ENCODE measurements at regions of chr17 and their contacts with region 1.

Region 1: GRCh38 chr17:59707114-59707970 is at the starts of genes PTRH2 and VMP1:
- DNase-seq: peak; percentile 99

Region 2: DNA sequence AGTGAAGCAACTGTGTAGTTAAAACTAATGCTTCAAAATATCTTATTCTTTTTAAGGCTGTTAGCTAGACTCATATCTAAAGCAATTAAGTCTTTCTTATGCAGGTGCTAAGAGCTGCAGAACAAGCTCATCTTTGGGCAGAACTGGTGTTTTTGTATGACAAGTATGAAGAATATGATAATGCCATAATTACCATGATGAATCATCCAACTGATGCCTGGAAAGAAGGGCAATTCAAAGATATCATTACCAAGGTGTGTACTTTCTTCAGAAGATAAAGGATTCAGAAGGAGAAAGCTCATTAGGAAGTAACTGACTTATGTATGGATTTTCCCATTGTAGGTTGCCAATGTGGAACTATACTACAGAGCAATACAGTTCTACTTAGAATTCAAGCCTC is 24.1 kb before region 1 on chr17:
- CTCF ChIA-PET with region 1: no interaction called
- POLR2A ChIA-PET with region 1: interaction called, 10 read pairs
- DNase-seq: no peak

Region 3: GRCh38 chr17:59737324-59737723 is 30.0 kb after region 1 on chr17:
- CTCF ChIA-PET with region 1: no interaction called
- POLR2A ChIA-PET with region 1: no interaction called
- DNase-seq: no peak

Region 4: DNA sequence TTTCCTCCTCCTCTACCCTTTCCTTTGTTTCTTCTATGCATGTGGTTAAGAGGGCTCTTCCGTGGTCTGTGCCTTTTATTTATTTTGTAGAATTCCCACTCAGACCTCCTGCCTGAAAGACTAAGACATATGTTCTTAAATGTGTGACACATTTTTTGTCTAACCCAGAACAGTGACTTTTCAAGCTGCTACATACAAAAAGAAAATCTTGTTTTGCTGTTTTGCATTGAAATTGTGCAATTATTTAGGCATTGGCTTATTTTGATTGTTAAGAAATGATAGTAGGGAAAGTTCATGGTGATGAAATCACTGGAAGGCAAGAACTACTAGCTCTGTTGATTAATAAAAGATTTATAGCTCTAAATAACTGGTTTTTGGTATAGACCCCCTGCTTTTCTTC is 108.6 kb after region 1 on chr17:
- CTCF ChIA-PET with region 1: no interaction called
- POLR2A ChIA-PET with region 1: no interaction called
- DNase-seq: no peak